ENCODE measurements at regions of chr19 and their contacts with region 1.

Region 1: GRCh38 chr19:56252699-56253422 is 19.7 kb upstream of the EDDM13 start:
- DNase-seq: peak; percentile 50
- H3K27ac ChIP-seq: no peak overlapping the region
- CTCF ChIP-seq: peak; percentile 76

Region 2: GRCh38 chr19:56111601-56112312 is 141.1 kb before region 1 on chr19:
- CTCF ChIA-PET with region 1: no interaction called
- POLR2A ChIA-PET with region 1: no interaction called
- DNase-seq: peak; percentile 17
- H3K27ac ChIP-seq: peak overlapping the region; percentile 46
- CTCF ChIP-seq: no peak

Region 3: DNA sequence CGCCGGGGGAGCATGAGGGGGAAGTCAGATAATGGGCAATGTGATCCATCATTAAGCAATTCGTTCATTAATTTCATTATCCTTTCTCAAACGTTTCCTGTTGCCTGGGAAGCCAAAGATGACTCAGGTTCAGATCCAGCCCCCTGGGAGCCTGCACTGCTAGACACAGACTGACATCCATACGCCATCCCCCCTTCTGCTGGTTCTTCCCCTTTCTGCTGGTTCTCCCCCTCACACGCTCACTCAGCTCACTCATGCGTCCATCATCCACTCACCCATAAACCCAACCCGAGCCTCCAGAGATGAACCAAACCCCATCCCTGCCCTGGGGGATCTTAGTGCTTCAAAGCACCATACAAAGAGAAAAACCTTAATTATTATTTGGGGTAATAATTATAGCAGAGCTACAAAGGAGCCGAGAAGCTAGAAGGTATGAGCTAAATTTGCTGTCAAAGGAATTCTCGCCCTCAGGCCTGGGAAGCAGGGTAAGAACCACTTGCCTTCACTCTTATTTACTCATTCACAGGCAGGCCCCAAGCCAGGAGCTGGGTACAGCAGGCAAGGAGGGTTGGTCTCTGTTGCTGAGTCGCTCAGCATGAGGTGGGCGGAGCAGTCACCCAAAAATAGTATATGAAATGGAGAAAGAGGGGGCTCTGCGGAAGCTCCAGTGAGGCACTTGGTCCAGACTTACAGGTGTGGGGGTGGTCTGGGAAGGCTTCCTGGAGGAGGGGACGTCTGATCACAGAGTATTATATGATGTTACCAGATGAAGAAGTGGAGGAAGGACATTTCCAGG is 118.8 kb before region 1 on chr19:
- CTCF ChIA-PET with region 1: no interaction called
- POLR2A ChIA-PET with region 1: no interaction called
- DNase-seq: no peak
- H3K27ac ChIP-seq: no peak overlapping the region
- CTCF ChIP-seq: no peak

Region 4: DNA sequence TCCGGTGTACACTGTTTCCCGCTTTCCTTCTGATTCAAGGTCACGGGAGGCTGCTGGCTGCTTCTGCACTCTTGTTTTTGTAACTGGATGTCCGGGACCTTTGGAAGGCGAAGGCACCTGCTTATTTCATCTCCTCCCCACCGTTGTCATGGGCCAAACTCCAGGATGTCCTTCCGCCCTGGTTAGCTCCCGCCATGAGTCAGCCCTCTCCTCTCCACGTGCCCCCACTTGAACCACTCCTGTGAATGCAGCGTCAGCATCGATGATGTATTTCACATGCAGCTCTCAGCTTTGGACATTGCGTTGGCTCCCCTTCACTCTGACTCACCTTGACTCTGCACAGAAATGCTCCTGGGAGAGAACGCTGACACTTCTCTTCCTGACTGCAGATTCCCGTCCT is 82.6 kb before region 1 on chr19:
- CTCF ChIA-PET with region 1: interaction called, 11 read pairs
- POLR2A ChIA-PET with region 1: no interaction called
- DNase-seq: peak; percentile 70
- H3K27ac ChIP-seq: no peak overlapping the region
- CTCF ChIP-seq: no peak

Region 5: GRCh38 chr19:56266051-56266450 is 13.2 kb after region 1 on chr19:
- CTCF ChIA-PET with region 1: interaction called, 16 read pairs
- POLR2A ChIA-PET with region 1: no interaction called
- DNase-seq: no peak
- H3K27ac ChIP-seq: no peak overlapping the region
- CTCF ChIP-seq: no peak

Region 6: GRCh38 chr19:56294549-56294948 is 41.7 kb after region 1 on chr19:
- CTCF ChIA-PET with region 1: no interaction called
- POLR2A ChIA-PET with region 1: no interaction called
- DNase-seq: peak; percentile 56
- H3K27ac ChIP-seq: peak overlapping the region; percentile 85
- CTCF ChIP-seq: no peak

Region 7: GRCh38 chr19:56314562-56315077 is 61.8 kb after region 1 on chr19 and contains the start of gene ZSCAN5A:
- CTCF ChIA-PET with region 1: interaction called, 19 read pairs
- POLR2A ChIA-PET with region 1: interaction called, 3 read pairs
- DNase-seq: peak; percentile 99
- H3K27ac ChIP-seq: peak within 1 kb of the TSS; percentile 95
- CTCF ChIP-seq: no peak

Region 8: DNA sequence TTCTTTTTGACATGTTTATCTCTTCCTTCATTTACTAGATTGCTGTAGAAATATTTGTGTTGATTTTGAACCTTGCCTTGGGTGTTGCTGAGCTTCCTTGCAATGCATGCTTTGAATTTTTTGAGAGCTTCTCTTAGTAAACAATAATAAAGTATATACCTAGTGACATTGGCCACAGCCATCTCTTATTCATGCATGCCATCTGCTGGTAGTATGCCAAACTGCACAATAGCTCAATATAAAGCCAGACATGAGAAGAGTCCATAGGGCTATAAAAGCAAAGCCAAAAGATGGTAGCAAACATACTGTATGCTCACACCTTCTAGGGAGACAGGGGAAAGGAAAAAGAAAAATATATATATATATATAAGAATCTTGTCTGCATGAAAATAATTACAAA is 80.6 kb after region 1 on chr19:
- CTCF ChIA-PET with region 1: interaction called, 36 read pairs
- POLR2A ChIA-PET with region 1: no interaction called
- DNase-seq: peak; percentile 38
- H3K27ac ChIP-seq: no peak overlapping the region
- CTCF ChIP-seq: peak; percentile 40